ENCODE measurements at regions of chr21 and their contacts with region 1.

Region 1: DNA sequence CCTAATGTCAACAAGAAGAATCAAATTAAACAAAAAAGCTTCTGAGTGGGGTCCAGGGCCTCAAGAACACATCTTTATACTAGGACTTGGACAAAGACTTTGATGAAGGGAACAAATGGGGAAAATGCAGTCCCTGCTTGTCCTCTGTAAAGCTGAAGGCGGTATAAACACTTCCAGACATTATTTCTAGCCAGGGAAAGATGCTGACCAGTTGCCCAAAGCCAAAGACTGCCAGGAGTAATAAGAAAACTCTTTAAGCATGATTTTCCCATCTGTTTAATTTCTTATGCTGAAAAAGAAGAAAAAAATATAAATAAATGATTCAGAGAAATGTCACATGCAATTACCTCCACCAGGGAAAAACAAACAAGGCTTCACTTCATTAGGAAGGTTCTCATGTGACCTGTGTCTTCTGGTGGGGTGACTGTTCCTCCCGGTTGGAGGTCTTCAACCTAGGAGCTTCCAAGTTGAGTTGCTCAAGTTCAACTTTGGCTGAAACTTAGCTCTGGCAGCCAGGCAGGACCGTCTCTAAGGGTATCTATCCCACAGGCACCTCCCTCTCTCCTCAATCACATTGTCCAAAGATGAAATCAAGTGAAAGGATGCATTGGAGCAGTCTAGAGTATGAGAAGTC is 65.2 kb upstream of the KCNE2 start:
- DNase-seq: no peak
- ATAC-seq: no peak
- H3K4me3 Mint-ChIP-seq: no peak overlapping the region
- H3K27ac Mint-ChIP-seq: no peak overlapping the region
- H3K4me1 Mint-ChIP-seq: no peaks in the 10 kb centered on the region
- H3K27me3 Mint-ChIP-seq: no peaks in the 10 kb centered on the region

Region 2: GRCh38 chr21:34215911-34216717 is 82.5 kb before region 1 on chr21:
- CTCF ChIA-PET with region 1: no interaction called
- POLR2A ChIA-PET with region 1: no interaction called
- intact Hi-C with region 1: no loop called
- DNase-seq: no peak
- ATAC-seq: no peak
- H3K4me3 Mint-ChIP-seq: no peak overlapping the region
- H3K27ac Mint-ChIP-seq: no peak overlapping the region
- H3K4me1 Mint-ChIP-seq: no peaks in the 10 kb centered on the region
- H3K27me3 Mint-ChIP-seq: no peaks in the 10 kb centered on the region

Region 3: GRCh38 chr21:34261841-34262468 is 36.7 kb before region 1 on chr21:
- CTCF ChIA-PET with region 1: no interaction called
- POLR2A ChIA-PET with region 1: no interaction called
- intact Hi-C with region 1: no loop called
- DNase-seq: no peak
- ATAC-seq: no peak
- H3K4me3 Mint-ChIP-seq: no peak overlapping the region
- H3K27ac Mint-ChIP-seq: no peak overlapping the region
- H3K4me1 Mint-ChIP-seq: no peaks in the 10 kb centered on the region
- H3K27me3 Mint-ChIP-seq: peaks cover 2% of the 10 kb centered on the region

Region 4: GRCh38 chr21:34762761-34763160 is 464.1 kb after region 1 on chr21:
- CTCF ChIA-PET with region 1: no interaction called
- POLR2A ChIA-PET with region 1: no interaction called
- intact Hi-C with region 1: loop called in 1 of 2 experiments (anchors 10 kb)
- DNase-seq: no peak
- ATAC-seq: no peak
- H3K4me3 Mint-ChIP-seq: no peak overlapping the region
- H3K27ac Mint-ChIP-seq: no peak overlapping the region
- H3K4me1 Mint-ChIP-seq: no peaks in the 10 kb centered on the region
- H3K27me3 Mint-ChIP-seq: no peaks in the 10 kb centered on the region

Measured in activated CD4-positive, alpha-beta T cell treated with anti-CD3 and anti-CD28 coated beads for 36 hours (primary cell).